GM10248 (cell line): ENCODE measurements at regions of chr2 and their contacts with region 1.

Region 1: GRCh38 chr2:38602732-38603401 is at the start of gene HNRNPLL:
- DNase-seq: peak; percentile 98
- CTCF ChIP-seq: peak; percentile 20

Region 2: GRCh38 chr2:38581193-38582147 is 21.4 kb before region 1 on chr2:
- CTCF ChIA-PET with region 1: interaction called, 19 read pairs
- POLR2A ChIA-PET with region 1: no interaction called
- DNase-seq: peak; percentile 26
- CTCF ChIP-seq: peak; percentile 60

Region 3: DNA sequence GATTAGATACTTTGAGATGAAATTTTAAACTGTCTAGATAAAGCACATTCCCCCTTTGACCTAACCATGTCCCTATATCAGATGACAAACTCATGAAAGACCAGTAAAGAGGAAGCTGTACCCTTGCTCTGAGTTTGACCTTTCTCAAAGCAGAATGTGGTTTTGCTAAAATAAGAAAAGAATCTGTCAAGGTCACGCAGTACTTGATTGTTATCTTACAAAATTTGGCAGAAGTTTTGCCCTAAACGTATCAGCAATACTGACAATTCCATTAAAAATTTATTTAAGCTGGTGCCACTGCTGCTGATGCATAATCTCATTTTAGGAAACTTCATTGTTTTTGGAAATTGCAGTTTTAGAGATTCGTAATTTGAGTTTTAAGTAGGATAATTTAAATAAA is 31.8 kb after region 1 on chr2:
- CTCF ChIA-PET with region 1: interaction called, 13 read pairs
- POLR2A ChIA-PET with region 1: no interaction called
- DNase-seq: peak; percentile 71
- CTCF ChIP-seq: no peak

Region 4: GRCh38 chr2:38672445-38673391 is 69.9 kb after region 1 on chr2:
- CTCF ChIA-PET with region 1: interaction called, 38 read pairs
- POLR2A ChIA-PET with region 1: no interaction called
- DNase-seq: no peak
- CTCF ChIP-seq: no peak

Region 5: GRCh38 chr2:38734299-38735058 is 131.6 kb after region 1 on chr2:
- CTCF ChIA-PET with region 1: interaction called, 45 read pairs
- POLR2A ChIA-PET with region 1: no interaction called
- DNase-seq: no peak
- CTCF ChIP-seq: no peak

Region 6: DNA sequence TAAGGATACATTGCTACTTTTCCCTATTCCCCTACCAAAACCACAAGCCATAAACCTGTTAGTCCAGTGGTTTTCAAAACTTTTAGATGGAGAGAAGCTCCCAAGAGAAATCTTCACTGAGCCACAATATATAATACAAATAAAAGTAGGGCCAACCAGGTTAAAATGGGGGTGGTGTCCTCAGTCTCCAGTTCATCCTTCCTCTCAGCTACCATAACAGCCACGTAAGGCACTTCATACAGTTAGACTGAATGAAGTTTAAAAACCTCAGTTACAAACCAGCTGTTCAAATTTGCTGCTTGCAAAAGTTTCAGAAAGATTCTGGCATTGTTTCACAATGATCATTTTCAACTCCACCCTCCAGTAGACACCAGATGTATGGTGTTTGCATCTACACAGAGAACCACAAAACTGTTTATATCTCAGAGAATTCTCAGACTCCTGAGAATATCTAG is 492.0 kb after region 1 on chr2:
- CTCF ChIA-PET with region 1: no interaction called
- POLR2A ChIA-PET with region 1: no interaction called
- DNase-seq: peak; percentile 53
- CTCF ChIP-seq: no peak